Activated CD8-positive, alpha-beta T cell treated with anti-CD3 and anti-CD28 coated beads for 36 hours (primary cell): ENCODE measurements at regions of chr19 and their contacts with region 1.

Region 1: GRCh38 chr19:47035127-47036096 is 13.0 kb downstream of the TMEM160 start:
- DNase-seq: peak; percentile 96
- ATAC-seq: peak; percentile 98
- H3K4me3 Mint-ChIP-seq: peak overlapping the region; percentile 79
- H3K27ac Mint-ChIP-seq: peak overlapping the region; percentile 82
- H3K4me1 Mint-ChIP-seq: peaks cover 14% of the 10 kb centered on the region
- H3K27me3 Mint-ChIP-seq: peaks cover 6% of the 10 kb centered on the region
- CTCF ChIP-seq: peak; percentile 97

Region 2: DNA sequence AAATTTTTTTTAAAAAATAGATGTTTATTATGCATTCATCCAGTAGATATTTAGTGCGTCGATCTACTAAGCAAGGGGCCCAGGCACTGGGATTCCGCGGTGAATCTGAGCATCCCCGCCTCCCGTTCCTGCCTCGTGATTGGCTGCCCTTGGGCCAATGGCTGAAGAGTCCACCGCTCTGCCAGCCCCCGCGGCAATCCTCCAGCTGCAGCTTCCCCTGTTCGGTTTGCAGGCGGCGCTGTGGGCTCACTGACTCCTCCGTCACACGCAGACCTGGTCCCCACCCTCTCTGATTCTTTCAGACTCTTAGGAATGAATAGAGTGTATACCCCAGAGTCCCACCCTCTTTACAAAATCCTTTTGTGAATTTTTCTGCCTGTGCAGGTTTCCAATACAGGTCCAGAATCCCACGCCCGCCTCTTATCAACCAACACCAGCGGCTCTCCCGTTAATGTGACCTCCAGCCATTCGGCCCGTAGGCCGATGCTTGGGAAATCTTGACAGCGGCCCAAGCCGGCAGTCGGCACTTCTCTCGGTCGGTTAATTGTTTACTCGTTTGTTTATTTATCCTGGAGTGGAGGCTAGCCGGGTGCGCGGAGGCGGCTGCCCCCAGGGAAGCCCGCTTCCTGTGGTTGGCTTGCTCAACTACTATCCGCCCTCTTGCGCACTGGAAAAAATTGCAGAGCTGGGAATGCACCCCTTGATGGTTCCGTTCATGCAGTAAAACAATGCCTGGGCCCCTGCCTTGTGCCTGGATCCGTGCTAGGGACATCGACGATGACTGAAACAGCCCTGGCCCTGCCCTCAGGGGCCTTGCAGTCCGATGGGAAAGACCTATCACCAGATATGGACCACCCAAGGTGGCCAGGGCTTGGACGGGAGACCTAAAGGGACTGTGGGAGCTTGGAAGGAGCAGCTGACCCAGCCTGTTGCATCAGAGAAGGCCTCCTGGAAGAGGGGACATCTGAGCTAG is 179.1 kb before region 1 on chr19:
- CTCF ChIA-PET with region 1: interaction called, 5 read pairs
- POLR2A ChIA-PET with region 1: no interaction called
- intact Hi-C with region 1: loop called (anchors 5 kb)
- DNase-seq: peak; percentile 97
- ATAC-seq: peak; percentile 70
- H3K4me3 Mint-ChIP-seq: peak overlapping the region; percentile 72
- H3K27ac Mint-ChIP-seq: peak overlapping the region; percentile 85
- H3K4me1 Mint-ChIP-seq: peaks cover 17% of the 10 kb centered on the region
- H3K27me3 Mint-ChIP-seq: no peaks in the 10 kb centered on the region
- CTCF ChIP-seq: peak; percentile 82

Region 3: DNA sequence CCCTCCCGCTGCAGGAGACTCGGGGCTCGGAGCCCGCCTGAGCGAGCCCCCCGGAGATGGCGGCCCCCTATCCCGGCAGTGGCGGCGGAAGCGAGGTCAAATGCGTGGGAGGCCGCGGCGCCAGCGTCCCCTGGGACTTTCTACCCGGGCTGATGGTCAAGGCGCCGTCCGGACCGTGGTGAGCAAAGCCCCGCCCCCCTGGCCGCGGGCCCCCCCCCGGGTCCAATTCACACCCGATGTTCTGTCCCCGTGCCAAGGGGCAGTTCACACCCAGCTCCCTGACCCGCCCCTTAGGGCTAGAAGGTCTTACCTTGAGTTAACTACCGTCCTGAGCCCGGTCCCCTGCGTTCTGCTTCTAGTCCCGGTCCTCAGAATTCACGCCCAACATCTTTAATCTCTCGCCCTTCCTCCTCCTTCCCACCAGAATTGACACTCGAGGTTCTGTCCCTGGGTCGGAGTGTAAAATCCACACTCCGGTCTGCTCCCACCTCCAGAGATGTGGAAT is 14.4 kb before region 1 on chr19:
- CTCF ChIA-PET with region 1: interaction called, 12 read pairs
- POLR2A ChIA-PET with region 1: interaction called, 4 read pairs
- intact Hi-C with region 1: no loop called
- DNase-seq: no peak
- ATAC-seq: peak; percentile 31
- H3K4me3 Mint-ChIP-seq: peak overlapping the region; percentile 44
- H3K27ac Mint-ChIP-seq: no peak overlapping the region
- H3K4me1 Mint-ChIP-seq: peaks cover 8% of the 10 kb centered on the region
- H3K27me3 Mint-ChIP-seq: peaks cover 46% of the 10 kb centered on the region
- CTCF ChIP-seq: no peak

Region 4: DNA sequence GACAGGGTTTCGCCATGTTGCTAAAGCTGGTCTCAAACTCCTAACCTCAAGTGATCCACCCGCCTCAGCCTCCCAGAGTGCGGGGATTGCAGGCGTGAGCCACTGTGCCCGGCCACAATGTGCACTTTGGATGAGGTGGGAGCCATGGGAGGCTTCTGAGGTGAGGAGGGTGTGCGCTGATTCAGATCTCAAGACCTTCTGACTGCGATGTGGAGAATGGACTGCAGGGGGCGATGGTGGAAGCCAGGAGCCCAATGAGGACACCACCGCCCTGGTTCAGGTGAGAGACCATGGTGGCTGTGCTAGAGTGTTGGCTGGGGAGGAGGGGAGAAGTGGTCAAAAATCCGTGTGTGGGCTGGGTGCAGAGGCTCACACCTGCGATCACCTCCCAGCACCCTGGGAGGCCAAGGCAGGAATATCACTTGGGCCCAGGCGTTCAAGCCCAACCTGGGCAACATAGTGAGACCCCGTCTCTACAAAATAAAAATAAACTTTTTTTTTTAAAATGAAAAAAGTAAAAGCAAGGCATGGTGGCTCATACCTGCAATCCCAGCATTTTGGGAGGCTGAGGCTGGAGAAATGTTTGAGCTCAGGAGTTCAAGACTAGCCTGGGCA is 244.9 kb after region 1 on chr19:
- CTCF ChIA-PET with region 1: no interaction called
- POLR2A ChIA-PET with region 1: no interaction called
- intact Hi-C with region 1: no loop called
- DNase-seq: peak; percentile 83
- ATAC-seq: peak; percentile 80
- H3K4me3 Mint-ChIP-seq: no peak overlapping the region
- H3K27ac Mint-ChIP-seq: no peak overlapping the region
- H3K4me1 Mint-ChIP-seq: peaks cover 14% of the 10 kb centered on the region
- H3K27me3 Mint-ChIP-seq: no peaks in the 10 kb centered on the region
- CTCF ChIP-seq: peak; percentile 72